Heart left ventricle (tissue), 16 donors: ENCODE measurements at regions of chr13 and their contacts with region 1.

Region 1: GRCh38 chr13:41905600-41906254 is 55.2 kb downstream of the VWA8 start:
- DNase-seq: no peak
- ATAC-seq: peak in 3 of 4 donors; percentile 42 to 65 (median 55)
- H3K4me3 ChIP-seq: no peak overlapping the region
- H3K27ac ChIP-seq: no peak overlapping the region
- H3K4me1 ChIP-seq: no peaks in the 10 kb centered on the region
- H3K27me3 ChIP-seq: no peaks in the 10 kb centered on the region
- CTCF ChIP-seq: peak; percentile 35 to 66 (median 48)
- POLR2A ChIP-seq: no peak

Region 2: DNA sequence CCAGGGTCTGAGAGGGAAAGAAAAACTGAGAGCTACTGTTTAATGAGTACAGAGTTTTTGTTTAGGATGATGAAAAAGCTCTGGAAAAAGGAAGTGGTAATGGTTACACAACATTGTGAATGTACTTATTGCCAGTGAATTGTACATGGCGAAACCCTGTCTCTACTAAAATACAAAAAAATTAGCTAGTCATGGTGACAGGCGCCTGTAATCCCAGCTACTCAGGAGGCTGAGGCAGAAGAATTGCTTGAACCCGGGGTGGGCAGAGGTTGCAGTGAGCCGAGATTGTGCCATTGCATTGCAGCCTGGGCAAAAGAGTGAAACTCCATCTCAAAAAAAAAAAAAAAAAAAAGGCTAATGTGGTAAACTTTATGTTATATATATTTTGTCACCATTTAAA is 41.1 kb before region 1 on chr13:
- intact Hi-C with region 1: no loop called
- DNase-seq: no peak
- ATAC-seq: peak in 3 of 4 donors; percentile 10 to 48 (median 30)
- H3K4me3 ChIP-seq: no peak overlapping the region
- H3K27ac ChIP-seq: peak overlapping the region in 1 of 12 donors; percentile 12
- H3K4me1 ChIP-seq: peaks cover 0 to 10% (median 0%) of the 10 kb centered on the region in 12 donors
- H3K27me3 ChIP-seq: no peaks in the 10 kb centered on the region
- CTCF ChIP-seq: no peak
- POLR2A ChIP-seq: no peak

Region 3: DNA sequence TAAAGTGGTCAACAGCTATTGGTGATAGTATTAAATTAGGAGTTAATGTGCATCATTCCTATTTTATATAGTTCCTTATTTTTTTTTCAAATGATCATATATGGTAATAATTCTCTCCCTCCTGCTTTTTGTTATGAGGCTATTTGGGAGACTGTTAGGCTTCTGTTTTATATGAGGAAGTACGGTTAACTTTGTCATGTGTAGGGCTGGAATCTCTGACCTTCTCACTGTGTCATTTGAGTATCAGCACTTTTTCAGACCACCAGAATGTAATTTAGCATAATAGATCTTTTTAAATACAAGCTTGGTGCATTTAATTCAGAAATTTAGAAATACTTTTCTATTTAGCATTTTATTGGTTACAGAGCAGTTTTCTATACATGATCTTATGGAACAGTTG is 150.4 kb after region 1 on chr13:
- intact Hi-C with region 1: loop called in 1 of 10 experiments (anchors 5 kb)
- DNase-seq: no peak
- ATAC-seq: peak in 1 of 4 donors; percentile 26
- H3K4me3 ChIP-seq: no peak overlapping the region
- H3K27ac ChIP-seq: peak overlapping the region in 1 of 12 donors; percentile 9
- H3K4me1 ChIP-seq: peaks cover 0 to 22% (median 11%) of the 10 kb centered on the region in 12 donors
- H3K27me3 ChIP-seq: no peaks in the 10 kb centered on the region
- CTCF ChIP-seq: no peak
- POLR2A ChIP-seq: no peak

Region 4: GRCh38 chr13:42153199-42154113 is 247.7 kb after region 1 on chr13:
- intact Hi-C with region 1: no loop called
- DNase-seq: no peak
- ATAC-seq: no peak
- H3K4me3 ChIP-seq: no peak overlapping the region
- H3K27ac ChIP-seq: no peak overlapping the region
- H3K4me1 ChIP-seq: no peaks in the 10 kb centered on the region
- H3K27me3 ChIP-seq: no peaks in the 10 kb centered on the region
- CTCF ChIP-seq: no peak
- POLR2A ChIP-seq: no peak